Dorsolateral prefrontal cortex (tissue), 120 donors: ENCODE measurements at regions of chr6 and their contacts with region 1.

Region 1: DNA sequence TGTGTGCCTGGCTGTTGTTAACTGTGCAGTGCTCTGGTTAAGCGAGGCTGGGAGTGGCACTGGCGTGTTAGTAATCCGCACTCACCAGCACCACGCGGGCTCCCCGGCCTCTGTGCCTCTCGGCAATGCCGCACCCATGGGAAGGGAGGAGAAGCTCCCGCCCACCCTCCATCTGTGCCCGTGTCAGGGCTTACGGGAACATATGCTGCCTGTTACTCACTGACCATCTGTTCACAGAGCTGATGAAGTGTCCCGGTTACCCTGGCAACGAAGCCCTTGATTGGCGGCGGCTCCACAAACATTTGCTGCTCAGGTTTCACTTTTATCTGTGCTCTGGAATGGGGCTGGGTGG is 114.7 kb downstream of the PSMB1 start:
- DNase-seq: peak; percentile 60 to 97 (median 90)
- H3K4me3 ChIP-seq: peak overlapping the region in 58 of 59 donors; percentile 2 to 67 (median 43)
- H3K27ac ChIP-seq: peak overlapping the region in 15 of 59 donors; percentile 6 to 87 (median 31)
- H3K27me3 ChIP-seq: no peaks in the 10 kb centered on the region
- CTCF ChIP-seq: no peak

Region 2: DNA sequence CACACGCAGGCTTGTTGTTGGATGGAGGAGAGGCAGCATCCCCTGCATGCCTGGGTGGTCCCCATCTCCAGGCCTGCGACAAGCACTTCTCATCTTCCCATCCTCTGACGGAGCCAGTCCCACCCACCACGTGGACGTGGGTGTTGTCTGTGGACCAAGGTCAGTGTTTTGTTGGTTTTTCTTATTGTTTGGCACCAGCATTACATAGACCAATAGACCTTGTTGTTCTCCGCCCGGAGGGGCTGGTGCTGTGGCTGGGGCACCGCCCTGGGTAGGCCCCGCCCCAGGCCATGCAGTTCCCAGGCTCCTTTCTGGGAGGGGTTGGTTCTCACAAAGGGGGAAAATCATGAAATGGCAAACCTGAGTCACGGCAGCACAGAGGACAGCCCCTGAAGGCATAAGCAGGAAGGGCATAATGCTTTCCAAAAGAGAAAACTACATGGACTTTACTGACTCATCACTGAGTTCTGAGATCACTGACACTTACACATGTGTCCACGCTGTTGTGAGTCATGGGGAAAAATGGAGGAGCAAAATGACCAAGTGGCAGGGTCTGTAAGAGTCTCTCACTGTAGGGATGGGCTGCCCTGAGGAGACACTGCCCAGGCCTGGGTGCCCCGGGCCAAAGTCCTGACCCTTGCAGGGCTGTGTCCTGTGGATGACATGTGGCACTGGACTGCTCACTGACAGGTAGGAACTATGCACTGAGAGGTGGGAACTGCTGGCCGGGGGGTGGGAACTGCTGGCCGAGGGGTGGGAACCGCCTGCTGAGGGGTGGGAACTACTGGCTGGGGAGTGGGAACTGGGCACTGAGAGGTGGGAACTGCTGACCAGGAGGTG is 1275.4 kb before region 1 on chr6:
- intact Hi-C with region 1: loop called in 1 of 2 experiments (anchors 10 kb)
- DNase-seq: no peak
- H3K4me3 ChIP-seq: no peak overlapping the region
- H3K27ac ChIP-seq: no peak overlapping the region
- H3K27me3 ChIP-seq: peaks cover 0 to 3% (median 0%) of the 10 kb centered on the region in 45 donors
- CTCF ChIP-seq: no peak

Region 3: DNA sequence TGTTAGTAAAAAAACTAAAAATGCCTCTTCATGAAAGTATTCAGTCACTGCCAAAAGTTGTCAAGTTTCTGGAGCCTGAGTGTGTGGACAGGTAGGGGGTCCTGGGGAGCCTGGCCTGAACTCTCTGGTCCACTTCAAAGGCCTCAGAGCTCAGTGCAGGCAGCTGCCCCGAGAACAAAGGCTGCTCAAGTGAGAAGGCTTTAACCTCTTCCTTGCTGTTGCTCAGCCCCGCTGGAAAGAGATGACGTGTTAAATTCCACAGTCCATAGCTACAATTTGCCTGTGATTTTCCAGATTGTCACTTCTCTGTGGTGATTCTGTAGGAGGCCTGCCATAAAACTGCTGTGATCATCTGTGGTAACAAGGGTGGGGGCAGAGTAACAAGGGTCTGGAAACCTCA is 34.9 kb before region 1 on chr6:
- intact Hi-C with region 1: loop called in 1 of 2 experiments (anchors 1 kb)
- DNase-seq: no peak
- H3K4me3 ChIP-seq: peak overlapping the region in 4 of 59 donors; percentile 2 to 37 (median 8)
- H3K27ac ChIP-seq: peak overlapping the region in 50 of 59 donors; percentile 3 to 88 (median 72)
- H3K27me3 ChIP-seq: no peaks in the 10 kb centered on the region
- CTCF ChIP-seq: no peak